ENCODE measurements at regions of chr3 and their contacts with region 1.

Region 1: GRCh38 chr3:152243721-152244516 is 24.8 kb upstream of the MBNL1 start:
- DNase-seq: peak; percentile 39
- H3K4me3 Mint-ChIP-seq: peak overlapping the region; percentile 94
- H3K27ac Mint-ChIP-seq: peak overlapping the region; percentile 94
- H3K4me1 Mint-ChIP-seq: peaks cover 51% of the 10 kb centered on the region
- H3K27me3 Mint-ChIP-seq: no peaks in the 10 kb centered on the region

Region 2: GRCh38 chr3:152199102-152199840 is 44.6 kb before region 1 on chr3:
- CTCF ChIA-PET with region 1: interaction called, 10 read pairs
- intact Hi-C with region 1: loop called (anchors 1 kb)
- DNase-seq: no peak
- H3K4me3 Mint-ChIP-seq: peak overlapping the region; percentile 75
- H3K27ac Mint-ChIP-seq: peak overlapping the region; percentile 99
- H3K4me1 Mint-ChIP-seq: peaks cover 69% of the 10 kb centered on the region
- H3K27me3 Mint-ChIP-seq: no peaks in the 10 kb centered on the region

Region 3: DNA sequence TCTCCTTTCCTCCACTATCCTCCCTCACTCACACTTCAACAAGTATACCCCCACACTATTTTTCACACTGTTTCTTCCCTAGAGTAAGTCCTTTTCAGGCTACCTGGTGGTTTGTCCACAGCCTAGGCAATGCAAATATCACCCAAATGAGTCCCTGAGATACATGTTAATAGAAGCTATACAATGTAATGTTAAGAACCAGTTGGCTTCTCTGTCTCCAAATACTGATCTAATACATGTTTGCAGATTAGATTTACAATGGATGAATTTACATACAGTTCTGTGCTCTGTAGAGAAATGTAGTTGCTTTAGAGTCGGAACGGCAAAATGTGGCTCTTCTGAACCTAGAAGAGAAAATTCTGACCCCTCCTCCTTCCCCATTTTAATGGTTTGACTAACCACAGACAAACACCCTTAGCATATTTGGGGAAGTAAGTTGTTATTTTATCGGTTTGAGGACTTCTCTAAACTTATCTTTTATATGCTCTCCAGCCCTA is 38.8 kb before region 1 on chr3:
- CTCF ChIA-PET with region 1: interaction called, 12 read pairs
- intact Hi-C with region 1: loop called (anchors 1 kb)
- DNase-seq: no peak
- H3K4me3 Mint-ChIP-seq: peak overlapping the region; percentile 89
- H3K27ac Mint-ChIP-seq: peak overlapping the region; percentile 99
- H3K4me1 Mint-ChIP-seq: peaks cover 67% of the 10 kb centered on the region
- H3K27me3 Mint-ChIP-seq: no peaks in the 10 kb centered on the region

Region 4: DNA sequence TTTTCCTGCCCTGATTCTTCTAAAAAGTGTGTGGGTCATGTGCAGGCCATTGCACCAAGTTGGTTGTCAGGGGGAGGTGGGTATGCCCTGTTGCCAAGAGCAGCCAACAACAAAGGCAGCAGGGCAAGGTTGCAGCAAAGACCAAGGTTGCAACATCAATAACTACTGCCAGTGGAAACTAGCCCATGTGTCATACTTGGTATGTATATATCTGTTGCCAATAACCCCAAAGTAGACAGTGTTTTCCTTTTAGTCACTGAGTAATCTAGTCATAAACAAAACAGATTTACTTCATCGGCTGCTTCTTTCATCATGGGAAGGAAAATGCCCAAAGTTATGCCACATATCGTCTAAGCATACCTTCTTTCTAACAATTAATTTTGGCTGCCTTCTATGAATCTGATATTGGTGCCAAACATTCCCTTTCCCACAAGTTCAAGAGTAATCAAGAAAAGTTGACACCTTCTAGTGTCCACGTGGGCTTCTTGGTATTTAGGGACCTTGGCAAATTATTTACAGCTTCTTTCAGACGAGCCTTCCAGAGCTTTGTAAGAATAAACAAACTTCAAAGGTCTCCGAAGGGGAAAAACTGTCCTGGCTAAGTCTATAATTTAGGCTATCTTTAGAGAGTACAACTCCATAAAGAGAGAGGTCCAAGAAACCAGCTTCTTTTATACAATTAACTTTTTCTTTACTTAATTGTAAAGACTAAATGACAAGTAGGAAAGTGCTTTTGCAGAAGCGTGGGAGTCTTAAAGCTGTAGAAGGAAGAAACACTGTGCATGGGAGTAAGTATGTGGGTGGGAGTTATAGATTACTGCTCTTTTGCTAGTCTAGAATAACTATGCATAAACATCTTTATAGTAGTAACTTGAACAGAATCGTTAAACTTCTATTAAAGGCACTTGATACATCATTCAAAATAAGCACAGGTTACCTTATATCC is 14.8 kb after region 1 on chr3:
- CTCF ChIA-PET with region 1: interaction called, 8 read pairs
- intact Hi-C with region 1: loop called (anchors 1 kb)
- DNase-seq: peak; percentile 81
- H3K4me3 Mint-ChIP-seq: peak overlapping the region; percentile 72
- H3K27ac Mint-ChIP-seq: peak overlapping the region; percentile 94
- H3K4me1 Mint-ChIP-seq: peaks cover 84% of the 10 kb centered on the region
- H3K27me3 Mint-ChIP-seq: no peaks in the 10 kb centered on the region

Measured in activated naive CD4-positive, alpha-beta T cell treated with anti-CD3 and anti-CD28 coated beads for 36 hours (primary cell).